Heart left ventricle (tissue), 16 donors: ENCODE measurements at regions of chr10 and their contacts with region 1.

Region 1: DNA sequence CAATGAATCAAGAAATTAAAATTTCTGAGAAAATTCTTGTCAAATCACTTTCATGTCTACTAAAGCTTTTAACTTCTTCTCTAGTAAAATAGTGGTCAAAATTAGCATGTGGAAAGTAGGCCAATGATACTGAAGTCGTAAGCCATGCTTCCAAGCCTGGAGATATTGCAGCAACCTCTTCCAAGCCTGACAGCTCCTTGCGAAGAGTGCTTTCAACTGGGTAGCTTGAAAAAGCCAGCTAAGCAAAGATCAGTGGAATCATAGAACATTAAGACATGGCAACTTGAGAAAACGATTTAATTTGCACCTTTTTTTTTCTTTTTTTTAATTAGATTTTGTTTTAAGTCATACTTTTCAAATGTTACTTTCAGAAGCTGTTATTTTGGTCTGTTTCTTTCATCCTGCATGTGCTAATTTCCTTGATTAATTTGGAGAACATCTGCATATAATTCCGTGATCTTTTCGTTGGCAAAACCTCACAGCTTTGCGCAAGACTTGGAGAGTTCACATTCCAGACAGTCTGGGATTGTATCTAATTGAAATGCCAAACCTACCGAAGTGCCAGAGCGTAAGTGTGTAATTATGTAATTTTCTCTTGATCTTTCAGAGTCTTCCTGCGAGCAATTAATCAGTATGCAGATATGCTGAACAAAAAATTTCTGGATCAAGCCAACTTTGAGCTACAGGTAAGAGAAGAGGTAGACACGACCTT is 142.2 kb upstream of the INSYN2A start:
- DNase-seq: no peak
- ATAC-seq: peak; percentile 41 to 85 (median 54)
- H3K4me3 ChIP-seq: no peak overlapping the region
- H3K27ac ChIP-seq: peak overlapping the region in 1 of 12 donors; percentile 20
- H3K4me1 ChIP-seq: peaks cover 0 to 14% (median 7%) of the 10 kb centered on the region in 12 donors
- H3K27me3 ChIP-seq: no peaks in the 10 kb centered on the region
- CTCF ChIP-seq: no peak
- POLR2A ChIP-seq: no peak

Region 2: GRCh38 chr10:127117125-127117524 is 221.4 kb before region 1 on chr10:
- intact Hi-C with region 1: loop called in 1 of 10 experiments (anchors 10 kb)
- DNase-seq: peak in 4 of 5 donors; percentile 37 to 55 (median 54)
- ATAC-seq: no peak
- H3K4me3 ChIP-seq: no peak overlapping the region
- H3K27ac ChIP-seq: no peak overlapping the region
- H3K4me1 ChIP-seq: peaks cover 0 to 6% (median 0%) of the 10 kb centered on the region in 12 donors
- H3K27me3 ChIP-seq: no peaks in the 10 kb centered on the region
- CTCF ChIP-seq: no peak
- POLR2A ChIP-seq: no peak

Region 3: GRCh38 chr10:127196230-127196954 is 142.2 kb before region 1 on chr10 and contains the start of gene INSYN2A:
- intact Hi-C with region 1: loop called in 1 of 10 experiments (anchors 10 kb)
- DNase-seq: peak in 3 of 5 donors; percentile 38 to 52 (median 47)
- ATAC-seq: peak in 3 of 4 donors; percentile 48 to 64 (median 58)
- H3K4me3 ChIP-seq: peak within 1 kb of the TSS; percentile 22 to 64 (median 50)
- H3K27ac ChIP-seq: no peak within 1 kb of the TSS
- H3K4me1 ChIP-seq: peaks cover 0 to 28% (median 13%) of the 10 kb centered on the region in 12 donors
- H3K27me3 ChIP-seq: peaks cover 0 to 19% (median 0%) of the 10 kb centered on the region in 9 donors
- CTCF ChIP-seq: peak in 5 of 12 donors; percentile 13 to 36 (median 28)
- POLR2A ChIP-seq: no peak
- total RNA-seq, gene INSYN2A: 0.07 to 0.37 (median 0.14) TPM in 6 of 9 donors, not detected in the others

Region 4: GRCh38 chr10:127550861-127551260 is 212.3 kb after region 1 on chr10:
- intact Hi-C with region 1: no loop called
- DNase-seq: no peak
- ATAC-seq: no peak
- H3K4me3 ChIP-seq: no peak overlapping the region
- H3K27ac ChIP-seq: no peak overlapping the region
- H3K4me1 ChIP-seq: no peaks in the 10 kb centered on the region
- H3K27me3 ChIP-seq: peaks cover 0 to 17% (median 0%) of the 10 kb centered on the region in 9 donors
- CTCF ChIP-seq: no peak
- POLR2A ChIP-seq: no peak